ENCODE measurements at regions of chr2 and their contacts with region 1.

Region 1: DNA sequence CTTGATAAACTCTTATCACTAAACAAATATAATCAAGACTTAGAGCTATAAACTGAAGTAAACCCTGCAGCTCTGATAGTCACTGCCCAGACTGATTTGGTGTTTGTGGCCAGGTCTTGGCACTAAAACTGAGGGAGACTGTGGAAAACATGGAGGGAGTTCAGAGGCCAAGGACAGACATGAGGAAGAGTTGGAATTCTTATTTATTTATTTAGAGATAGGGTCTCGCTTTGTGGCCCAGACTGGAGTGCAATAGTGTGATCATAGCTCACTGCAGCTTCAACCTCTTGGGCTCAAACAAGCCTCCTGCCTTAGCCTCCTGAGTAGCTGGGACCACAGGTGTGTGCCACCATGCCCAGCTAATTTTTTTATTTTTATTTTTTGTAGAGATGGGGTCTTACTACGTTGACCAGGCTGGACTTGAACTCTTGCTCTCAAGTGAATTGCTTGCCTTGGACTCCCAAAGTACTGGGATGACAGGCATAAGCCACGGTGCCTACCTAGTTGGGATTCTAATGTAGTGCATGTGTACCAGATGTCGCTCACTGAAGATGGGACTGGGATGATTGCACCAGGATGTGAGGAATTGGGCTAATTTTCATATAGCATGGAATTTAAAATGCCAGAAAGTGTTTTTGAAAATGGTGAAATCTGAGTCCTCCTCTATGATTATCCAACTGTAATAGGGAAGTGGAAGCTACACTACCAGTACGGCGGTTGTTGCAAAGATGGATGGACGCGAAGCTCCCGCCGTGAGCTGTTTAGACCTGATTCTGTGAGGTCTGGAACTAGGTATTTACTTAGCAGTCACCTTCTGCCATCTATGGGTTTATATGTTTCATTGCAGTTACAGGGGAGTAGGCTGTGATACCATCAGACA is 52.7 kb upstream of the CTLA4 start:
- DNase-seq: no peak
- ATAC-seq: peak; percentile 81

Region 2: DNA sequence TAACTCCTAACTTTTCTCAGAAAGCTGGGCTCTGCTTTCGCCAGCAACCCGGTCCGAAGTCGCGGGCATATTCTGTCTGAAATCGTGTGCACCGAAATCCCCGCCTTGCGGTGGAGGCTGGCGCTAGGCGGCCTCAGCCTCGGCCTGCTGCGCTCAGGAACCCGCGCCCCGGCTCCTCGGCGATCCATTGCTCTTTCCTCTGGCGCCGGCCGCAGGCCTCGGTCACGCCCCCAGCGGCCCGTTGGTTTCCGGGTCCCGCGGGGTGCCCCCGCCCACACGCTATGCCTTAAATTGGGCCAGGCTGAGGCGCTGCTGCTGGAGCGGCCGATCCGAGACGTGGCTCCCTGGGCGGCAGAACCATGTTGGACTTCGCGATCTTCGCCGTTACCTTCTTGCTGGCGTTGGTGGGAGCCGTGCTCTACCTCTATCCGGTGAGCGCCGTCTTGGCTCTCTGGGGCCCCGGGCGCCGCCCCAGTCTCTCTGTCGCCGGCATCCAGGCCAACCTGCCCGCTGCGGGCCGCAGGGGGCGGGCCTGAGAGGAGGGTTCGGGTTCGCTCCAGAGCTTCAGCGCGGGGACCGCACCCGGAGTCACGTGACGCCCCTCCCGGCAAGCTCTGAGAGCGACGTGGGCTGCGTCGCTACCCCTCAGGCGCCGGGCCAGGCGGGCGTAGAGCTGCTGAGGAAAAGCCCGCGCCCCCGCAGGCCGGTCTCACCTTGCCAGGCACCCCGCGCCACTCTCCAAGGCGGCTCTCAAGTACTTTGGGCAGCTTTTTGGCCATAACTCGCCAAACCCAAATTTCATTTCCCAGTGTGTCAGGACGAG is 576.0 kb before region 1 on chr2 and contains the start of gene CYP20A1:
- intact Hi-C with region 1: loop called (anchors 5 kb)
- DNase-seq: peak; percentile 98
- ATAC-seq: peak; percentile 99
- total RNA-seq, gene CYP20A1: 11.4 TPM

Region 3: GRCh38 chr2:203484266-203485112 is 330.4 kb before region 1 on chr2:
- intact Hi-C with region 1: loop called (anchors 2 kb)
- DNase-seq: no peak
- ATAC-seq: peak; percentile 87

Region 4: DNA sequence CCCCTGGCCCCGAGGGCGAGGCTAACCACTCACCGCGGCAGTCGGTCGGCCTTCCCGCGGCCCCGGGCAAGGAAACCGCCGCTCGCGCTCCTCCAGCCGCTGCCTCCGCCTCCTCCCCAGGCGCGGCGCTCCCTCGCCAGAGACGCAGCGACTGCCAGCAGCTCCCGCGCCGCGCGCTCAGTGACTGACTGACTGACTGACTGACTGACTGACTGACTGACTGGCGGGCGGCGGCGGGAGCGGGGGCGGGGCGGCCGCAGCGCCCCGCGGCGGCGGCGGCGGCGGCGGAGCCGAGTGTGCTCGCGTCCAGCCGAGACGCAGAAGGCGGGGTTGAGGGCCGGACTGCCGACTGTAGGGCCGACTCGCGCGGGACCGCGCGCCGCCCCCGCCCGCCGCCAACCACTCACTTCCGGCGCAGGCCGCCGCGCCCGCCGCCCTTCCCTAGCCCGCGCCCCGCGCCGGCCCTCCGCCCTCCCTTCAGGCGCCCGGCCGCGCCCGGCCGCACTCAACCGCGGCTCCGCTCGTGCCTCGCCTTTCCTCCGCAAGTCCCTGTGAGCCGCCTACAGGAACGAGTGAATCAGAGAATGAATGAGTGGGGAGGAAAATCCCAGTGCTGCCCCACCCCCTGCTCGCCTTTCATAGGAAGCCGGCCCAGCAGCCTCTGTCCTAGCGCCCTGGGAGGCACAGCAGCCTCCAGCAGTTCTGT is 279.7 kb before region 1 on chr2 and contains the start of gene RAPH1:
- intact Hi-C with region 1: loop called (anchors 5 kb)
- DNase-seq: peak; percentile 94
- ATAC-seq: peak; percentile 94
- total RNA-seq, gene RAPH1: 15.1 TPM

Region 5: DNA sequence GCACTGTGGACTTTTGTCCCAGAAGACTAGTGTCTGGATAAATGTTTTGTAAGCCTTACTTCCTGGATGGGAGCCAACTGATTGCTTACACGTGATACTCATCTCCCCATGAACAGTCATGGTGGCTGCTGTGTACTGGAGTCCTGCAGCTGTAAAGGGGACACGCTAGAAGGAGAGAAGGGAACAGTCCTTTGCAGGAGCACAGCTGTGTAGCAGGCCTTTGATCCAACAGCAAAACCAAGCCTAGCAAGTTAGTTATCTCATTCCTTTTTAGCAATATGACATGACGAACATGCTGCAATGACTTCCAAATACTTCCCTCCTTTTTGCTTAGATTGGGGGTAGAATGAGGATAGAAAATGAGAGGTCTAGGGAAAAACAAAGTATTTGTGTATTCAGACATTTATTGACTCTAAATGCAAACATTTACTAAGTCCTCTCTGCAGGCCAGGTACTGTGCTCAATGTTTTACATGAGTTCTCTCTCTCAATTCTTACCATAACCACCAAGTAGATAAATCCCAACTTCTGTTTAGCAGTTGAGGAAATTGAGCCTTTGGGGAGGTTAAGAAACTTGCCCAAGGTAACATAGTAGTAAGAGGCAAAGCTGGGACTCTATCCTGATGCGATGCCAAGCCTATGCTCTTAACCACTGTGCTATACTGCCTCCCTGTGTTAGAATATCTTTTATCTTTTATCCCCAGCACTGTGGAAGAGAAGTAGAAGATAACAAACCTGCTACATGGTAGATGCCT is 163.9 kb before region 1 on chr2:
- intact Hi-C with region 1: loop called (anchors 5 kb)
- DNase-seq: no peak
- ATAC-seq: peak; percentile 74

Region 6: DNA sequence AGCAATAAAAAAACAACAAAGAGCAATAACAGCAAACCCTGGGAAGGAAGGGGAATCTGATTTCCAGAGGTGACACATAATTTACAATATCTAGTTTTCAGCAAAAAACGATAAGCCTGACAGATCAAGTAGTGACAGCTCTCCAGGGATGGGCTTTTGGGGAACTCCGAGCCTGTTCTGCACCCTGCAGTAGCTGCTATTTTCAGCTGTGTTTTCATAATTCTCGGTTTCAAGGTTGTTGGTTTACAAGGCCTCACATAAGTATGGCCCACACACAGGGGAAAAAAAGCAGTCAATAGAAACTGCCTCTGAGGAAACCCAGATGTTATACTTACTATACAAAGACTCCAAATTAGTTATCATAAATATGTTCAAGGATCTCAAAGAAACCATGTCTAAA is 15.0 kb before region 1 on chr2:
- intact Hi-C with region 1: no loop called
- DNase-seq: no peak
- ATAC-seq: no peak

Region 7: DNA sequence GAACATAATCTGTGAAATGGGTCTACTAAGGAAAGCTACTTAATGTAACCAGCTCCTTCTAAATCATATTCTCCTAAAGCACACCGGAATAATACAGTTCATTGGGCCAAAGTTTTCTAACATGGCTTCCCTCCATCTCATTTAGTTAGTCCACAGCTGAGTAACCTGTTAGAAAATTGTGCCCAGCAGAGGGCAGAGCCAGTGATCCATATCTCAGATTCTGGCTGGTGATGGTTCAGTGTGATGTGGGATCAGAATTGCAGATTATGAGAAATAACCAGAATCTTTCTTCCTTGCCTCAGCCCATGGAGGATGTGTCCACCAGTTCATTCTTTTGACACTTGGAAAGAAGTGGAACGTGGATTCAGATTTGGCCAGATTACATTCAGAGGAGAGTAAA is 43.3 kb after region 1 on chr2:
- intact Hi-C with region 1: no loop called
- DNase-seq: no peak
- ATAC-seq: no peak

Region 8: GRCh38 chr2:203909261-203909967 is 94.5 kb after region 1 on chr2:
- intact Hi-C with region 1: loop called (anchors 2 kb)
- DNase-seq: no peak
- ATAC-seq: peak; percentile 83